ENCODE measurements at regions of chr10 and their contacts with region 1.

Region 1: DNA sequence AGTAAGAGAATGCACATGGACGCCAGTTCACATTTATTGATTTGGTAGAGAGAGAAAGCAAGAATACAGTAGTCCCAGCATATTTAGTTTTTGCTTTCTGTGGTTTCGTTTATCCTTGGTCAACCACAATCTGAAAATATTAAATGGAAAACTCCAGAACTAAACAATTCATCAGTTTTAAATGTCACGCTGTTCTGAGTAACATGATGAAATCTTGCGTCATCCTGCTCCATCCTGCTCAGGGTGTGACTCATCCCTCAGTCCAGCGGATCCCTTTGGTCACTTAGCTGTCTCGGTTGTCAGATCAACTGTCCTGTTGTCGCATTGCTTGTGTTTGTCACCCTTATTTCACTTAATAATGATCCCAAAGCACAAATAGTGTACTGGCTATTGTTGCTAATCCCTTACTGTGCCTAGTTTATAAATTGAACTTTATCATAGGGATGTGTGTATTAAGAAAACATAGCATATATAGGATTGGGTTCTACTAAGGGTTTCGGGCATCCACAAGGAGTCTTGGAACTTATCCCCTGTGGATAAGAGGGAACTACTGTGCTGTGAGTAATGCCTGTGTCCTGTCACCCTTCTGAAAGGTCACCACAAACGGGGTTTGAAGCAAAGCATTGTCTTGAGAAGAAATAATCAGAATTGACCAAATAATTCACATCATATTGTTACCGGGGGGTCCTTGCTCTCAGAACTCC is 73.6 kb downstream of the OTUD1 start:
- DNase-seq: peak; percentile 70
- ATAC-seq: peak; percentile 56; the same call in 1 of the 2 replicates
- H3K4me3 ChIP-seq: no peak overlapping the region
- H3K27ac ChIP-seq: peak overlapping the region; percentile 100
- H3K4me1 ChIP-seq: peaks cover 33% of the 10 kb centered on the region
- H3K27me3 ChIP-seq: no peaks in the 10 kb centered on the region
- CTCF ChIP-seq: no peak

Region 2: DNA sequence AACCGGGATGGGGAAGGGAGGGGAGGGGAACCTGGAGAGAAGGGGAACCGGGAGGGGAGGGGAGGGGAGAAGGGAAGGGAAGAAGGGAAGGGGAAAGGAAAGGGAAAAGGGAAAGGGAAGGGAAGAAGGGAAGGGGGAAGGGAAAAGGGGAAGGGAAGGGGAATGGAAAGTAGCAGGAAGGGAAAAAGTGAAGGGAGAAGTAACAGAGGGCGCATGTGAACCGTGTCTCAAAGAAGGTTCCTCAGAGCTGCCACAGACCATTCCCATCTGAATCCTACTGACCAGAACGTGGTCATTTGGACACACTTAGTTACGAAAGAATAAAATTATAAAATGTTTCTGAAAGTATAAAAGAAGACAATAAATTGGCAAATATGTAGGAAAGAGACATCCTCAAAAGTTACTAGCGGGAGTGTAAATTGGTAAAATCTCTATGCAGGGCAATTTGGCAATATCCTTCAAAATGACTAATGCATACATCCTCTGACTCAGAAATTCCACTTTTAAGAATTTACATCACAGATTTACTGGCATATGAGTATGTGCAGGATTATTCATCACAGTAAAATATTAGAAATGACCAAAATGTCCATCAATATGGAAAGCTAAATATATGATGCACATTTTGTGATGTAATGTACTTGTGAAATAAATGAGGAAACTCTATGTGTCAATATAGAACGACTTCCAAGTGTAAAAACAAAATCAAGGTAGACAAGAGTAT is 180.8 kb before region 1 on chr10:
- CTCF ChIA-PET with region 1: no interaction called
- POLR2A ChIA-PET with region 1: no interaction called
- intact Hi-C with region 1: loop called (anchors 5 kb)
- DNase-seq: peak; percentile 90
- ATAC-seq: peak; percentile 51
- H3K4me3 ChIP-seq: 0 out of 2 replicates have a peak overlapping the region, but pooled peaks have one; percentile 13
- H3K27ac ChIP-seq: peak overlapping the region; percentile 93
- H3K4me1 ChIP-seq: peaks cover 10% of the 10 kb centered on the region
- H3K27me3 ChIP-seq: no peaks in the 10 kb centered on the region
- CTCF ChIP-seq: no peak

Region 3: DNA sequence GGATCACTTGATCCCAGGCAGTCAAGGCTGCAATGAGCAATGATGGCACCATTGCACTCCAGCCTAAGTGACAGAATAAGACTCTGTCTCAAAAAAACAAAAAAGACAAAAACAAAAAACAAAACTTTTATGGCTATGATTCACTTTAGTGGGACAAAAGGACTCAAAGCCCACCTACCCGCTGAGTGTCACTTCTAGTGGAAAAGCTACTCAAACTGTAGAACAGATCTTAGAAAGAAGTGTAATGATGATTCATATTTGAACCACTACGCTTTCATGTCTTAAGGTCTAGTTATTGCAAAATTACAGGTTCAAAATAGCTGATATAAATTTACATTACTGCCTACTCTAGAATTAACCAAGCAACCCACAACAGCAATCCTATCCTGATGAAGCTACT is 120.7 kb before region 1 on chr10:
- CTCF ChIA-PET with region 1: no interaction called
- POLR2A ChIA-PET with region 1: no interaction called
- intact Hi-C with region 1: no loop called
- DNase-seq: no peak
- ATAC-seq: no peak
- H3K4me3 ChIP-seq: no peak overlapping the region
- H3K27ac ChIP-seq: no peak overlapping the region
- H3K4me1 ChIP-seq: no peaks in the 10 kb centered on the region
- H3K27me3 ChIP-seq: no peaks in the 10 kb centered on the region
- CTCF ChIP-seq: no peak

Region 4: DNA sequence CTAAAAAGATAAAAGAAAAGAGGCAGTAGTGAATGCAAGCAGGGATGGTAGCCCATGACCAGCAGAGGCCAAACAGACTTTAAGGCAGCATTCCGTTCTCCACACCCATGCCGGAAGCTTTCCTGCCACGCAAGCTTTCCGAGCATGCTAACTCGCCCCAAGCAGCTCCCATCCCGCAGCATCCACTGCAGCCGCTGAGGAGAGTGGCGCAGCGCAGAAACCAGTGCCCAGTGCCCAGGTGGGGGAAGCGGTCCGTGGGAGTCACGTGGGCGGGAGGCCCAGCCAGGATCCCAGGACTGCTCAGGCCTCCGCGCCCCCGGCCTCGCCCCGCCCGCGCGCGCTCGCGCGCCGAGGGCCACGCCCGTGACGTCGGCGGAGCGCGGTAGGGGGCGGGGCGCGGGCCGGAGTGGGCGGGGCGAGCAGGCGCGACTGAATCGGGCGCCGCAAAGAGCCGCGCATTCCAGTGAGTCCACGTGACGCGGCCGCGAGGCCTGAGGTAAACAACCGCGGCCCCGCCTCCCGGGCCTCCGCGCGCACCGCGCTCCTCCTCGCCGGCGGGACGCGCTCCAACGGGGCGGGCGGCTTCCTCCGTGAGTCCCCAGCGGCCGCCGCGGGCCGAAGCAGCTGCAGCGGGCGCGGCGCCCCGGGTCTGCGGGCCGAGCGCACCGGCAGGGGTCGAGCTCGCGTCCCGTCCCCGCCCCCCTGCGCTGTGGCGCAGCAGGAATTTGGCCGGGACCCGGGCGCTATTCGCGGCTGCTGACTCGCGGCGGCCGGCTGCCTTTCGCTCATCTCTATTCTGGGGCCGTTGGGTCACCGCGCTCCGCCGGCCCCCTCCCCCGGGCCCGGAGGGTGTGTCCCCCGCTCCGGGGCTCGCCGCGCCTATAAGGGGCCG is 73.7 kb before region 1 on chr10 and contains the start of gene OTUD1:
- CTCF ChIA-PET with region 1: no interaction called
- POLR2A ChIA-PET with region 1: no interaction called
- intact Hi-C with region 1: loop called (anchors 5 kb)
- DNase-seq: peak; percentile 90
- ATAC-seq: peak; percentile 79
- H3K4me3 ChIP-seq: peak within 1 kb of the TSS; percentile 79
- H3K27ac ChIP-seq: peak within 1 kb of the TSS; percentile 66
- H3K4me1 ChIP-seq: peaks cover 34% of the 10 kb centered on the region
- H3K27me3 ChIP-seq: no peaks in the 10 kb centered on the region
- CTCF ChIP-seq: no peak
- total RNA-seq, gene OTUD1: 6.0 and 9.2 TPM in 2 replicates

Region 5: DNA sequence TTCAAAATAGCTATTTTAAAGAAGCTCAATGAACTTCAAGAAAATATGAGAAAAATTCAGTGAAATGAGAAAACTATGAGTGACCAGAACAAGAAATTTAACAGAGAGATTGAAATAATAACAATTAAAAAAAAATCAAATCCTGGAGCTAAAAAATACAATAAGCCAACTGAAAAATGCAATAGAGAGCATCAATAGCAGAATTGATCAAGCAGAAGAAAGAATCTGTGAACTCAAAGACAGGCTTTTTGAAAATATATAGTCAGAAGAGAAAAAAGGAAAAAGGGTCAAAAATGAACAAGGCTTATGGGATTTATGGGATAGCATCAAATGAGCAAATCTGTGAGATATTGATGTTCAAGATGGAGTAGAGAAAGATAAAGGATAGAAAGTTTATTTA is 59.4 kb after region 1 on chr10:
- CTCF ChIA-PET with region 1: no interaction called
- POLR2A ChIA-PET with region 1: no interaction called
- intact Hi-C with region 1: no loop called
- DNase-seq: no peak
- ATAC-seq: no peak
- H3K4me3 ChIP-seq: no peak overlapping the region
- H3K27ac ChIP-seq: no peak overlapping the region
- H3K4me1 ChIP-seq: no peaks in the 10 kb centered on the region
- H3K27me3 ChIP-seq: peaks cover 13% of the 10 kb centered on the region
- CTCF ChIP-seq: no peak

Region 6: GRCh38 chr10:23613900-23614299 is 101.4 kb after region 1 on chr10:
- CTCF ChIA-PET with region 1: no interaction called
- POLR2A ChIA-PET with region 1: no interaction called
- intact Hi-C with region 1: no loop called
- DNase-seq: no peak
- ATAC-seq: no peak
- H3K4me3 ChIP-seq: no peak overlapping the region
- H3K27ac ChIP-seq: no peak overlapping the region
- H3K4me1 ChIP-seq: no peaks in the 10 kb centered on the region
- H3K27me3 ChIP-seq: 0 out of 2 replicates have a peak, but pooled peaks cover 7% of the 10 kb centered on the region
- CTCF ChIP-seq: no peak